SK-N-SH (cell line): ENCODE measurements at regions of chr1 and their contacts with region 1.

Region 1: DNA sequence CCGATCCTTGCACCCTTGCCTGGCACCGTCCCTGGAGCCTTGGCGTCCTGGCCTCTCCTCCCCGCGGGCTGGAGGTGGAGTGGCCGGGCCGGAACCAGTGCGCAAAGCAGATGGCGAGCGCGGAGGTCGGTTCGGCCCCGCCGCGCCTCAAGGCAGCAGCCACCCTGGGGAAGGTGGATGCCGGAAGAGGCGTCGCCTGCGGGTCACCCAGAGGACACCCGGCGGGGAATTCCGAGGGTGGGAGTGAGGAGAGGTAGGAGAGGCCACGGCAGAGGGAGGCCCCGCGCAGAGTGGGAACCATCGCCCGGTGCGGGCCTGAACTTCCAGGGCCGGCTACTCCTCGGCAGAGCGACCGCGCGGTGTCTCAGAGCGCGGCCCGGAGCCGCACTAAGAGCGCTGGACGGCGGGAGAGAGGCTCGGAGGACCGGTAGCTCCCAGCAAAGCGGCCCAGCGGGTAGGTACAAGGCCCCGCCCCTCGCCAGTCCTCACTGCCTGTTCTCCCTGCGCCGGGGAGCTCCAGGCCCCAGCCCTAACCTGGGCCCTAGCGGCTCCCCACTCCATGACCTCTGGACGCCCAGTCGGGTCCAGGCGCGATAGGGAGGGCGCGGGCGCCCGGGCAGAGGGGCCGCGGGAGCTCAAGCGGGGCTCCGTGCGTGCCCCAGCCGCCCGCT is at the start of gene RNF207:
- DNase-seq: no peak
- H3K4me3 ChIP-seq: no peak within 1 kb of the TSS; a peak in 1 of 4 replicates
- H3K27ac ChIP-seq: no peak within 1 kb of the TSS
- H3K4me1 ChIP-seq: peaks cover 0 to 18% of the 10 kb centered on the region in 2 experiments; a peak in 1 of 4 replicates
- H3K27me3 ChIP-seq: no peaks in the 10 kb centered on the region
- CTCF ChIP-seq: no peak
- EP300 ChIP-seq: no peak
- RAD21 ChIP-seq: no peak
- polyA plus RNA-seq, gene RNF207: 19.2 and 25.4 TPM in 2 replicates

Region 2: GRCh38 chr1:6082430-6082971 is 123.5 kb before region 1 on chr1:
- CTCF ChIA-PET with region 1: interaction called, 11 read pairs
- POLR2A ChIA-PET with region 1: no interaction called
- DNase-seq: peak; percentile 82
- H3K4me3 ChIP-seq: no peak overlapping the region
- H3K27ac ChIP-seq: no peak overlapping the region
- H3K4me1 ChIP-seq: peaks cover 0 to 18% of the 10 kb centered on the region in 2 experiments; a peak in 1 of 4 replicates
- H3K27me3 ChIP-seq: no peaks in the 10 kb centered on the region
- CTCF ChIP-seq: peak; percentile 34
- EP300 ChIP-seq: no peak
- RAD21 ChIP-seq: peak; percentile 62

Region 3: DNA sequence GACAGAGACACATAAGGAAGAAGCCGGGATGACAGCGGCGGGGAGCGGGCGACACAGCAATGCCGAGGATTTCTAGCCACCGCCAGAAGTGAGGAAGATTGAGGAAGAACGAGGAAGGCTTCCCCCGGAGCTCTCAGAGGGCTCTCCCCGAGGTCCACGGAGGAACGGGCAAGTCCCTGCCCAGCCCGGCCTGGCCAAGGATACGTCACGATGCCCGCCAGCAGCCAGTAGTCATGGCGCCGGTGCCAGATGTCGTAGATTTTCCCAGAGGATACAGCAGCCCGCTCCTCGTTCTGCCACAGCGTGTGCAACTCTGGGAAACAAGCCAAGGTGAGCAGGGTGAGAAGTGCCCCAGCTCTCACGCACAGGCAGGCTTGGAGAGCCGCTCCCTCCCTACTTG is 94.4 kb before region 1 on chr1:
- CTCF ChIA-PET with region 1: no interaction called
- POLR2A ChIA-PET with region 1: no interaction called
- DNase-seq: peak; percentile 94
- H3K4me3 ChIP-seq: no peak overlapping the region
- H3K27ac ChIP-seq: peak overlapping the region in 1 of 2 experiments; percentile 41; a peak in 1 of 4 replicates
- H3K4me1 ChIP-seq: peaks cover 0 to 11% of the 10 kb centered on the region in 2 experiments; a peak in 1 of 4 replicates
- H3K27me3 ChIP-seq: no peaks in the 10 kb centered on the region
- CTCF ChIP-seq: no peak
- EP300 ChIP-seq: 0 out of 4 replicates have a peak, but pooled peaks of 1 of the 2 experiments have one; percentile 11
- RAD21 ChIP-seq: no peak

Region 4: GRCh38 chr1:6220241-6220640 is 14.3 kb after region 1 on chr1:
- CTCF ChIA-PET with region 1: interaction called, 10 read pairs
- POLR2A ChIA-PET with region 1: interaction called, 4 read pairs
- DNase-seq: no peak
- H3K4me3 ChIP-seq: no peak overlapping the region
- H3K27ac ChIP-seq: no peak overlapping the region
- H3K4me1 ChIP-seq: no peaks in the 10 kb centered on the region
- H3K27me3 ChIP-seq: no peaks in the 10 kb centered on the region
- CTCF ChIP-seq: no peak
- EP300 ChIP-seq: no peak
- RAD21 ChIP-seq: no peak

Region 5: DNA sequence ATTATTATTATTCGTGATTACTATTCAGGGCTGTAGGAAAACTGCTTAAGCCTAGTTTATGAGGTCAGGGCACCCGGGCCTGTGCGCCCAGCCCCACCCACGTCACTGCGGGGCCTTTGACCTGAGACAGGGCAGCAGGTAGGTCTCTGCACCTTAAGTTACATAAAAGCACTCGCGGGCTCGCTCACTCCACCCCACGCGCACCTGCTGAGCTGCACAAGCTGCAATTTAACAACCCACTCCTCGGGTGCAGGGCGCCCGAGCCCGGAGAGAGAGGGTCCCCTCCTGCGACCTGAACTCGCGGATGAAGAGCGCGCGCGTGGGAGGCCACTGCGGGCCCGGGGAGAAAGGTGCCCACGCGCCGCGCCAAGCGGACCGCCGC is 29.3 kb after region 1 on chr1:
- CTCF ChIA-PET with region 1: interaction called, 15 read pairs
- POLR2A ChIA-PET with region 1: interaction called, 6 read pairs
- DNase-seq: no peak
- H3K4me3 ChIP-seq: peak overlapping the region; percentile 66 to 79
- H3K27ac ChIP-seq: peak overlapping the region in 1 of 2 experiments; percentile 77; a peak in 2 of 4 replicates
- H3K4me1 ChIP-seq: peaks cover 0 to 9% of the 10 kb centered on the region in 2 experiments; a peak in 1 of 4 replicates
- H3K27me3 ChIP-seq: no peaks in the 10 kb centered on the region
- CTCF ChIP-seq: no peak
- EP300 ChIP-seq: no peak
- RAD21 ChIP-seq: no peak

Region 6: DNA sequence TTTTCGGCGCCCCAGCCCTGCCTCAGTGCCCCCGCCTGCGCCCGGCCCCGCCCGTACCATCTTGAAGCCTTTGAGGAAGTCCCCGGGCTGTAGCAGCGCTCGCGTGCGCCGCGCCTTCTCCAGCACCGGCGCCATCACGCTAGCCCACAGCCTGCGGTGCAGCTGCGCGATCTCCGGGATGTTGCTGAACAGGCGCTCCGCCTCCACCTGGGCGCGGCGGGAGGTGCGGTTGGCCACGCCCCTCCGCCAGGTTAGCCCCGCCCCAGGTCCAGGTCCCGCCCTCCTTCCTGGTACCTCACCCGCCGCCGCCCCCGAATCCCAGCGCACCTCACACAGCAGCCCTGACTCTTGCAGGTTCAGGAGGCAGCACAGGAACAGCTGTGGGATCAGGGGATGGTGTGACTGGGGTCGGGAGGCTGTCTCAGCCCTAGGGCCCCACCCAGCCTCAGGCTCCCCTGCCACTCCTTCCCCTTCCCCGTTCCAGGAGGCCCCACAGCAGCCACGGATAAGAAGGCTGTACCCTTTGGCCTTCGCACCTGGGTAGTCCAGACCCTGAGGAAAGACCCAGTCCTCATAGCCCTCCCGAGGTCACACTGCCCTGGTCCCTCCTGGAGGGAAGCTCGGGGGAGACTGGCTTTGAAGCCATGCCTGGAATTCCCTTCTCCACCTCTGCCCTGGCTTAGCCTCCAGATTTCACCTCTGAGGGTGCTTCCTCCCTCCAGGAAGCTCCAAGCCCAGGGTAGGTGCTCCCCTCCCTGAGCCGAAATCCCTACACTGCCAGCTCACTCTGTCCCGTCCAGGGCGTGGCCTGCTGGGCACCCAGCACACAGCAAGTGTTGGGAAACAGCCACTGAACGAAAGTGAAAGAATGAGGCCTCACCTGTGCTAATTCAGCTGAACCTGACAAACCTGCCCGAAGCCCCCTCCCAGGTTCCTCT is 265.7 kb after region 1 on chr1:
- CTCF ChIA-PET with region 1: no interaction called
- POLR2A ChIA-PET with region 1: no interaction called
- DNase-seq: no peak
- H3K4me3 ChIP-seq: no peak overlapping the region
- H3K27ac ChIP-seq: no peak overlapping the region
- H3K4me1 ChIP-seq: peaks cover 0 to 2% of the 10 kb centered on the region in 2 experiments; a peak in 1 of 4 replicates
- H3K27me3 ChIP-seq: no peaks in the 10 kb centered on the region
- CTCF ChIP-seq: no peak
- EP300 ChIP-seq: no peak
- RAD21 ChIP-seq: no peak